ENCODE measurements at regions of chr11 and their contacts with region 1.

Region 1: GRCh38 chr11:62652161-62653006 is 718 bp downstream of the INTS5 start:
- DNase-seq: no peak
- H3K4me3 ChIP-seq: peak overlapping the region; percentile 67 to 97 (median 79)
- H3K4me3 Mint-ChIP-seq: peak overlapping the region; percentile 87 to 94
- H3K27ac ChIP-seq: peak overlapping the region; percentile 65 to 89
- H3K27ac Mint-ChIP-seq: peak overlapping the region; percentile 86 to 94 (median 91)
- H3K4me1 ChIP-seq: peaks cover 11 to 17% of the 10 kb centered on the region in 2 donors
- H3K4me1 Mint-ChIP-seq: peaks cover 23% of the 10 kb centered on the region
- H3K27me3 ChIP-seq: no peaks in the 10 kb centered on the region
- H3K27me3 Mint-ChIP-seq: peaks cover 0 to 3% (median 0%) of the 10 kb centered on the region in 3 donors
- CTCF ChIP-seq: no peak

Region 2: GRCh38 chr11:62678770-62679696 is 26.6 kb after region 1 on chr11 and contains the start of gene UBXN1:
- intact Hi-C with region 1: loop called in 1 of 2 experiments (anchors 2 kb)
- DNase-seq: peak; percentile 82 to 87 (median 85)
- H3K4me3 ChIP-seq: peak within 1 kb of the TSS; percentile 77 to 98 (median 93)
- H3K4me3 Mint-ChIP-seq: peak within 1 kb of the TSS; percentile 87 to 93
- H3K27ac ChIP-seq: peak within 1 kb of the TSS; percentile 83 to 97
- H3K27ac Mint-ChIP-seq: peak within 1 kb of the TSS; percentile 89 to 96 (median 93)
- H3K4me1 ChIP-seq: peaks cover 13 to 29% of the 10 kb centered on the region in 2 donors
- H3K4me1 Mint-ChIP-seq: peaks cover 33% of the 10 kb centered on the region
- H3K27me3 ChIP-seq: no peaks in the 10 kb centered on the region
- H3K27me3 Mint-ChIP-seq: peaks cover 0 to 3% (median 2%) of the 10 kb centered on the region in 3 donors
- CTCF ChIP-seq: no peak
- polyA plus RNA-seq, gene UBXN1: 93.9 to 147 (median 106) TPM

Region 3: GRCh38 chr11:62705880-62706849 is 53.8 kb after region 1 on chr11:
- intact Hi-C with region 1: loop called in 1 of 2 experiments (anchors 5 kb)
- DNase-seq: peak; percentile 89 to 93 (median 91)
- H3K4me3 ChIP-seq: peak overlapping the region; percentile 70 to 91 (median 84)
- H3K4me3 Mint-ChIP-seq: peak overlapping the region; percentile 89 to 92
- H3K27ac ChIP-seq: peak overlapping the region; percentile 78 to 85
- H3K27ac Mint-ChIP-seq: peak overlapping the region; percentile 89 to 99 (median 94)
- H3K4me1 ChIP-seq: peaks cover 67 to 85% of the 10 kb centered on the region in 2 donors
- H3K4me1 Mint-ChIP-seq: peaks cover 57% of the 10 kb centered on the region
- H3K27me3 ChIP-seq: no peaks in the 10 kb centered on the region
- H3K27me3 Mint-ChIP-seq: no peaks in the 10 kb centered on the region
- CTCF ChIP-seq: no peak